ENCODE measurements at regions of chr10 and their contacts with region 1.

Region 1: GRCh38 chr10:112471878-112472487 is 25.0 kb downstream of the VTI1A start:
- DNase-seq: peak; percentile 65

Region 2: GRCh38 chr10:112456533-112456932 is 15.4 kb before region 1 on chr10:
- CTCF ChIA-PET with region 1: no interaction called
- POLR2A ChIA-PET with region 1: no interaction called
- DNase-seq: no peak

Region 3: GRCh38 chr10:112490545-112490944 is 18.6 kb after region 1 on chr10:
- CTCF ChIA-PET with region 1: interaction called, 10 read pairs
- POLR2A ChIA-PET with region 1: no interaction called
- DNase-seq: no peak

Region 4: DNA sequence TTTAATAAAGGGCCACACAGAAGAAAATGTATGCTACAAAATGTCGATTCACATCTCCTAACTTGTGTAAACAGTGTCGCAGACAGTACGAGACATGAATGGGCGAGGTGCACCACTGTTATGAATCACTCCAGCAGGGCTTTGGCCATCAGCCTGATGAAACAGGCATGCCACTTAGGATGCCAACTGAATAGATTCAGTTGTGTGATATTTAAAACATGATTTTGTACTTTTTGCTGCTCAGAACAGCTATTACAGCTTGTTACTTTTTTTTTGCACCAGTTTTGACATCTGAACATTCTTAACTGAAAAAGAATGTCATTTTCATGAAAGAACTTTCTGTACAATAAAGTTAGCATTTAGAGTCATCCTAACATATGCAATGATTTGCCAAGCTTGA is 113.1 kb after region 1 on chr10:
- CTCF ChIA-PET with region 1: no interaction called
- POLR2A ChIA-PET with region 1: no interaction called
- DNase-seq: no peak